ENCODE measurements at regions of chrX and their contacts with region 1.

Region 1: DNA sequence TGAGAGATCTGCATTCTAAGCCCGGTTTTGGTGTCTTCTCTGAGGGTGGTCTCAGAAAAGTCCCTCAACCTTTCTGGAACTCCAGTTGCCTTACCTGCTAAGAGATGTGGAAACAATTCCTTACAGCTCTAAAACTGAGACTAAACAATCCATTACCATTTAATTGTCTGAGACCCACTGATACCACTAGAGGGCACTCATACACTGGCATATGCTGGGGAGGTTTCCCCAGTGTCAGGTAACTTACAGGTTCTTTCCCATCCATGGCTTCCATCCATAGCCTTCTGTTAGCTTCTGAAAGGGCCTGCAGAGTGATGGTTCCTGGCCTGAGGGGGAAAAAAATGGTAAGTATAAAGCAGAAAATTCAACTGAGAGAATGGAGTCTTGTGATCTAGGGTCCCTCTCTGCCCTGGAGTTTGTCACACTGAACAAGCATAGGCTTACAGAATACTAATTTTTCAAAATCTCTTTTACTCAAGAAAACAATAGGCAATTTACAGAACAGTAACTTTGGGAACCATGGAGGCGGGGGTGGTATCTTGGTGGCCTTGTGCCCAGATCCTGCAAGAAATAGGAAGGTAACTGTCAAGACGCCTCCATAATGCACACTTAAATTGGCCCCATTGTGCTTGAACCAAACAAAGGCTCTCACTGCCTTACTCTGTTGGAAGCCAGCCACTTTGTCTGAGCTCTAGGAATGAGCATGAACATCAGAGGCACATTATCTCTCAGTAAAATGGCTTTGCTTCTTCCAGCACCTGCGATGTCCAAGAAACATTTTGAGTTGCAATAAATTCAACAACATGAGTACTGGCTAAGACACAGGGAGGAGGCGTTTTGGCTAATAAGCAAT is 236.1 kb downstream of the OPHN1 start:
- DNase-seq: peak; percentile 38
- ATAC-seq: peak; percentile 84
- H3K4me3 ChIP-seq: no peak overlapping the region
- H3K27ac ChIP-seq: no peak overlapping the region
- H3K4me1 ChIP-seq: no peaks in the 10 kb centered on the region
- H3K27me3 ChIP-seq: no peaks in the 10 kb centered on the region
- CTCF ChIP-seq: peak; percentile 76

Region 2: GRCh38 chrX:68072016-68072415 is 125.1 kb before region 1 on chrX:
- CTCF ChIA-PET with region 1: no interaction called
- POLR2A ChIA-PET with region 1: no interaction called
- in situ Hi-C with region 1: no loop called
- intact Hi-C with region 1: no loop called
- DNase-seq: no peak
- ATAC-seq: no peak
- H3K4me3 ChIP-seq: no peak overlapping the region
- H3K27ac ChIP-seq: no peak overlapping the region
- H3K4me1 ChIP-seq: no peaks in the 10 kb centered on the region
- H3K27me3 ChIP-seq: no peaks in the 10 kb centered on the region
- CTCF ChIP-seq: no peak

Region 3: GRCh38 chrX:68490599-68490998 is 293.4 kb after region 1 on chrX:
- CTCF ChIA-PET with region 1: interaction called, 8 read pairs
- POLR2A ChIA-PET with region 1: no interaction called
- in situ Hi-C with region 1: no loop called
- intact Hi-C with region 1: loop called (anchors 5 kb)
- DNase-seq: no peak
- ATAC-seq: peak; percentile 96
- H3K4me3 ChIP-seq: no peak overlapping the region
- H3K27ac ChIP-seq: no peak overlapping the region
- H3K4me1 ChIP-seq: no peaks in the 10 kb centered on the region
- H3K27me3 ChIP-seq: no peaks in the 10 kb centered on the region
- CTCF ChIP-seq: peak; percentile 64

Measured in Panc1 (cell line).